Gastrocnemius medialis (tissue), 4 donors: ENCODE measurements at regions of chr10 and their contacts with region 1.

Region 1: GRCh38 chr10:22316285-22317120 is at the start of gene COMMD3:
- DNase-seq: peak; percentile 79 to 83
- ATAC-seq: peak; percentile 80 to 82
- H3K4me3 ChIP-seq: peak within 1 kb of the TSS; percentile 79 to 96 (median 84)
- H3K27ac ChIP-seq: peak within 1 kb of the TSS; percentile 94 to 97 (median 95)
- H3K4me1 ChIP-seq: peaks cover 24 to 30% of the 10 kb centered on the region in 2 donors
- H3K27me3 ChIP-seq: no peaks in the 10 kb centered on the region
- CTCF ChIP-seq: no peak
- POLR2A ChIP-seq: peak; percentile 81 to 90
- total RNA-seq, gene COMMD3: 26.8 to 50.9 (median 37.9) TPM

Region 2: GRCh38 chr10:21533467-21534279 is 782.8 kb before region 1 on chr10 and contains the start of gene MLLT10:
- in situ Hi-C with region 1: loop called in 2 of 4 experiments (anchors 10 kb)
- intact Hi-C with region 1: loop called (anchors 2 kb)
- DNase-seq: peak; percentile 89 to 95
- ATAC-seq: peak; percentile 74 to 75
- H3K4me3 ChIP-seq: peak within 1 kb of the TSS; percentile 77 to 98 (median 88)
- H3K27ac ChIP-seq: peak within 1 kb of the TSS; percentile 90 to 100 (median 98)
- H3K4me1 ChIP-seq: peaks cover 25% of the 10 kb centered on the region in 2 donors
- H3K27me3 ChIP-seq: no peaks in the 10 kb centered on the region
- CTCF ChIP-seq: peak; percentile 33 to 54 (median 46)
- POLR2A ChIP-seq: peak; percentile 85 to 90
- total RNA-seq, gene MLLT10: 13.6 to 26.6 (median 21.6) TPM

Region 3: DNA sequence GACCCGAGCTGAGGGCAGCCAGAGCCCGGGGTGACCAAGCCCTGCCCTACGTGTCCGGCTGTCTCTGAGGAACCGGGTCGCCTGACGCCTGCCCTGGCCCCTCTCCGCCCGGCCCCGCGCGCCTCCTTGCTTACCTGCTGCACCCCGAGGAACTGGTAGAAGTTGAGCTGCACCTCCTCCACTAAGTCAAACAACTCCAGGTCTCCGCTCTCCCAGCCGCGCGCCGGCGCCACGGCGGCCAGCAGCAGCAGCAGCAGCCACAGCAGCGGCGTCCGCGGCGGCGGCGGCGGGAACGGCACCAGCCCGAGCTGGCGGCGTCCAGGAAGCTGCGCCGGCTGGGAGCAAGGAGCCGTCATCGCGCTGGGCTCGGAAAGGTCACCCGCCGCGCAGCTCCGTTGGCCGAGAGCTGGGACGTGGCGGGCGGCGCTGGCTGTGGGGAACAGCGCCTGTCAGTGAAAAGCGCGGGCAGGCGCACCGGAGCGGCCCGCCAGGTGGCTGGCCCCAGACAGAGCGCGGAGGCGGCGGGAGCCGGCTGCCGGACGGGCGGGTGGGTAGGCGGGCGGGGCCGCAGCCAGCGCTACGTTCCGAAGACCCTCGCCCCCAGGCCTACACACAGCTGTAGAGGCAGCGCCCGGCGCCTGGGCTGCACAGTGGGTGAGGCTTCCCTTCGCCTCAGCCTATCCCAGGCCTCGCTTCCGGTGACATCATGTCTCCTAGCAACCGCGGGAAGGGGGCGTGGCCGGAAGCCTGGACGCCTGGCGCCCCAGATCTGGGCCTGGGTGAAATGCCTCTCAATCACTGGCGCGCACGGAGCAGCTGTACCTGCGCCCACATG is 313.2 kb before region 1 on chr10 and contains the start of gene DNAJC1:
- in situ Hi-C with region 1: loop called (anchors 5 to 10 kb)
- intact Hi-C with region 1: loop called (anchors 5 kb)
- DNase-seq: peak; percentile 92 to 97
- ATAC-seq: peak; percentile 97
- H3K4me3 ChIP-seq: peak within 1 kb of the TSS; percentile 74 to 88 (median 84)
- H3K27ac ChIP-seq: peak within 1 kb of the TSS; percentile 82 to 96 (median 94)
- H3K4me1 ChIP-seq: peaks cover 14 to 18% of the 10 kb centered on the region in 2 donors
- H3K27me3 ChIP-seq: no peaks in the 10 kb centered on the region
- CTCF ChIP-seq: peak in 4 of 5 experiments; percentile 5 to 43 (median 26)
- POLR2A ChIP-seq: peak; percentile 85 to 90
- total RNA-seq, gene DNAJC1: 24.1 to 56.4 (median 35.7) TPM

Region 4: DNA sequence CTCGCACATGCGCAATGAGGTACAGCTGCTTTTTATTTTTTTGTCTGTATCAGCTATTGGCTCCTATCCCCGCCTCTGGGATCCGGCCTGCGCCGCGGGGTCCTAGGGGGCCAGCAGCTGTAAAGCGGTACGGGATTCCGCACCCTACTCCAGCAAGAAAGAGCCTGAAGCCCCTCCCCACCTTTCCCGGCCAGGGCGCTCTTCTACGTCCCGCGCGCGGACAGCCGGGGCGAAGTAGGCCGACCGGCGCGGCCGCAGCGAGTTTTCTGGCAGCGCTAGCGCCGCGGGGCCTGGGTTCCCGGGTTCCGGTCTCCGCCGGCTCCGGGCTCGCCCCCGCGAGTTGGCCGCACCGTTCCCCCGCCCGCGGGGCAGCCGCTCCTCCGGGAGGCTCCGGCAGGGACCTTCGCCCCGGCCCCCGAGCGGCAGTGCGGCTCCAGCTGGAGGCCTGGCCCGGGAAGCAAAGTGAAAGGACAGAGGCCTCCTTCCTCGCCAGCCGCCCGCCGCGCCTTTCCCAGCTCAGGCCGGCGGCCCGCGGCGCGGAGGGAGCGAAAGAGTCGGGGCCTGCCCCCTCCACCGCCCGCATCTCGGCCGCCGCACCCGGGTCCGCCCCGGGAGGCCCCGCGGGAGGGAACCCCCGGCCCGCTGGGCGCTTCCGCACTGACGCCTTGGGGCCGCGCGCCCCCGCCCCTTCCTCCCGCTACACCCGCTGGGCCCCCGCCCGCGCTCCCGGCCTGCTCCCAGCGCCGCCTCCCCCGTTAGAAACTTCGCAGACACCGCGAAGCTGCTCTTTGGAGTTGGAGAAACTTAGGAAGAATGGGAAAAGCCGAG is 24.1 kb after region 1 on chr10:
- in situ Hi-C with region 1: no loop called
- intact Hi-C with region 1: loop called (anchors 2 kb)
- DNase-seq: peak in 1 of 2 donors; percentile 52
- ATAC-seq: peak; percentile 79 to 80
- H3K4me3 ChIP-seq: peak overlapping the region; percentile 73 to 85 (median 76)
- H3K27ac ChIP-seq: peak overlapping the region; percentile 84 to 89 (median 86)
- H3K4me1 ChIP-seq: peaks cover 13 to 25% of the 10 kb centered on the region in 2 donors
- H3K27me3 ChIP-seq: peaks cover 89 to 90% (median 90%) of the 10 kb centered on the region in 3 donors
- CTCF ChIP-seq: peak in 1 of 5 experiments; percentile 7
- POLR2A ChIP-seq: peak; percentile 41 to 46

Region 5: GRCh38 chr10:22369434-22370072 is 53.0 kb after region 1 on chr10:
- in situ Hi-C with region 1: no loop called
- intact Hi-C with region 1: no loop called
- DNase-seq: no peak
- ATAC-seq: no peak
- H3K4me3 ChIP-seq: no peak overlapping the region
- H3K27ac ChIP-seq: no peak overlapping the region
- H3K4me1 ChIP-seq: peaks cover 0 to 4% of the 10 kb centered on the region in 2 donors
- H3K27me3 ChIP-seq: peaks cover 0 to 2% (median 0%) of the 10 kb centered on the region in 3 donors
- CTCF ChIP-seq: no peak
- POLR2A ChIP-seq: no peak

Region 6: DNA sequence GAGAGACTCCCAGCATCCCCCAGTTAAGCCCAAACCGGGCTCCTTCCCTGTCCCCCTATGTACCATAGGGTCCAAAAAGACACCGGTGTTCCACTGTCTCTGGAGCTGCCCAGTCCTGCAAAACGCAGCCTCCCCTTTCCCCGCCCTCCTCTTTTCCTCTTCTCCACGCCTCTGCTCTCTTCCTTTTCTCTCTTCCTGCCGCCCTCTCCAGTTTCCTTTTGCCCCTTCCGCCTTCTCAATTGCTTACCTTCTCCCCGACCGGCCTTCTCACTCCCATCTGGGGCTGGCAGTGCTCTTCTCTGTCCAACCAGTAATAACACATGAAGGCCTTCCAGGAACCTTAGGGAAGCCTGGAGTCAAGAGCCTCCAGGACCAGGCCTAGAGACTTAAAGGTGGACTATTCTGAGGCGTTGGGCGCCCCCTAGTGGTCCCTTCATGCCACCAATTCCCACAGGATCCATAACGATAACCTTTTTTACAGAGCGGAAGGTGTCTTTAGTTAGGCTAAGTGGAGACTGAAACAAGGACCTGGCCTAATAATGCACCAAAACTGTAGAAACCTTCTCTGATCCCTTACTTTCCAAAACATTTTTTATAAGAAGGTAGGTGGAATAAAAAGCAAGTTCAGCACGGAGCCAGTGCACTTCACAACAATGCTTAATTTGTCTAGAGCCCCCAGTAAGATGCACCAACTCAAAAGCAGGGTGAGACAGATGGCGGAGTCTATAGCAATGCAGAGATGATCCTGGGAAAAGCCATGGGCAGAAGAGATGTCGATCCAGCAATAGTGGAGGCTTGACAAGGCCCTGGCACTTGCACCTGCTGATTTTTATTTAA is 751.7 kb after region 1 on chr10:
- in situ Hi-C with region 1: no loop called
- intact Hi-C with region 1: loop called (anchors 10 kb)
- DNase-seq: peak; percentile 20 to 46
- ATAC-seq: peak; percentile 49 to 62
- H3K4me3 ChIP-seq: no peak overlapping the region
- H3K27ac ChIP-seq: no peak overlapping the region
- H3K4me1 ChIP-seq: peaks cover 22 to 32% of the 10 kb centered on the region in 2 donors
- H3K27me3 ChIP-seq: no peaks in the 10 kb centered on the region
- CTCF ChIP-seq: peak in 4 of 5 experiments; percentile 60 to 82 (median 70)
- POLR2A ChIP-seq: no peak